ENCODE measurements at regions of chr2 and their contacts with region 1.

Region 1: GRCh38 chr2:86035883-86036668 is 69.6 kb downstream of the POLR1A start:
- DNase-seq: peak; percentile 71
- ATAC-seq: peak; percentile 92
- H3K4me3 ChIP-seq: peak overlapping the region; percentile 49; the same call in 1 of the 2 replicates
- H3K27ac ChIP-seq: peak overlapping the region; percentile 76
- H3K4me1 ChIP-seq: peaks cover 37% of the 10 kb centered on the region
- H3K27me3 ChIP-seq: no peaks in the 10 kb centered on the region
- CTCF ChIP-seq: peak; percentile 39 to 56 (median 49); a peak in 5 of 6 replicates
- EP300 ChIP-seq: peak; percentile 51 to 70
- POLR2A ChIP-seq: no peak; the same call in 1 of the 2 replicates
- RAD21 ChIP-seq: peak; percentile 66; the same call in 1 of the 2 replicates

Region 2: GRCh38 chr2:85852937-85853498 is 183.1 kb before region 1 on chr2:
- CTCF ChIA-PET with region 1: interaction called, 17 read pairs
- POLR2A ChIA-PET with region 1: interaction called, 3 read pairs
- RAD21 ChIA-PET with region 1: interaction called, 14 read pairs
- SMC1A ChIA-PET with region 1: interaction called, 22 read pairs
- in situ Hi-C with region 1: no loop called
- intact Hi-C with region 1: loop called (anchors 2 kb)
- DNase-seq: peak; percentile 88
- ATAC-seq: peak; percentile 84
- H3K4me3 ChIP-seq: peak overlapping the region; percentile 51; the same call in 1 of the 2 replicates
- H3K27ac ChIP-seq: peak overlapping the region; percentile 84
- H3K4me1 ChIP-seq: peaks cover 49% of the 10 kb centered on the region
- H3K27me3 ChIP-seq: no peaks in the 10 kb centered on the region
- CTCF ChIP-seq: no peak
- EP300 ChIP-seq: peak; percentile 5 to 51; a peak in 1 of 4 replicates
- POLR2A ChIP-seq: peak; percentile 57; the same call in 1 of the 2 replicates
- RAD21 ChIP-seq: no peak

Region 3: GRCh38 chr2:85865539-85866164 is 170.4 kb before region 1 on chr2:
- CTCF ChIA-PET with region 1: interaction called, 8 read pairs
- POLR2A ChIA-PET with region 1: interaction called, 3 read pairs
- RAD21 ChIA-PET with region 1: interaction called, 13 read pairs
- SMC1A ChIA-PET with region 1: interaction called, 14 read pairs
- in situ Hi-C with region 1: no loop called
- intact Hi-C with region 1: no loop called
- DNase-seq: peak; percentile 62
- ATAC-seq: peak; percentile 90
- H3K4me3 ChIP-seq: no peak overlapping the region; the same call in 1 of the 2 replicates
- H3K27ac ChIP-seq: no peak overlapping the region
- H3K4me1 ChIP-seq: peaks cover 24% of the 10 kb centered on the region
- H3K27me3 ChIP-seq: no peaks in the 10 kb centered on the region
- CTCF ChIP-seq: no peak
- EP300 ChIP-seq: peak in 1 of 2 experiments; percentile 58; a peak in 1 of 4 replicates
- POLR2A ChIP-seq: no peak
- RAD21 ChIP-seq: peak; percentile 7; the same call in 1 of the 2 replicates

Region 4: GRCh38 chr2:85999061-85999831 is 36.8 kb before region 1 on chr2:
- CTCF ChIA-PET with region 1: interaction called, 56 read pairs
- POLR2A ChIA-PET with region 1: interaction called, 41 read pairs
- RAD21 ChIA-PET with region 1: interaction called, 116 read pairs
- SMC1A ChIA-PET with region 1: interaction called, 114 read pairs
- in situ Hi-C with region 1: no loop called
- intact Hi-C with region 1: loop called (anchors 2 kb)
- DNase-seq: peak; percentile 77
- ATAC-seq: peak; percentile 87
- H3K4me3 ChIP-seq: peak overlapping the region; percentile 10; the same call in 1 of the 2 replicates
- H3K27ac ChIP-seq: peak overlapping the region; percentile 93
- H3K4me1 ChIP-seq: peaks cover 63% of the 10 kb centered on the region
- H3K27me3 ChIP-seq: no peaks in the 10 kb centered on the region
- CTCF ChIP-seq: no peak
- EP300 ChIP-seq: no peak
- POLR2A ChIP-seq: peak; percentile 64
- RAD21 ChIP-seq: no peak

Region 5: DNA sequence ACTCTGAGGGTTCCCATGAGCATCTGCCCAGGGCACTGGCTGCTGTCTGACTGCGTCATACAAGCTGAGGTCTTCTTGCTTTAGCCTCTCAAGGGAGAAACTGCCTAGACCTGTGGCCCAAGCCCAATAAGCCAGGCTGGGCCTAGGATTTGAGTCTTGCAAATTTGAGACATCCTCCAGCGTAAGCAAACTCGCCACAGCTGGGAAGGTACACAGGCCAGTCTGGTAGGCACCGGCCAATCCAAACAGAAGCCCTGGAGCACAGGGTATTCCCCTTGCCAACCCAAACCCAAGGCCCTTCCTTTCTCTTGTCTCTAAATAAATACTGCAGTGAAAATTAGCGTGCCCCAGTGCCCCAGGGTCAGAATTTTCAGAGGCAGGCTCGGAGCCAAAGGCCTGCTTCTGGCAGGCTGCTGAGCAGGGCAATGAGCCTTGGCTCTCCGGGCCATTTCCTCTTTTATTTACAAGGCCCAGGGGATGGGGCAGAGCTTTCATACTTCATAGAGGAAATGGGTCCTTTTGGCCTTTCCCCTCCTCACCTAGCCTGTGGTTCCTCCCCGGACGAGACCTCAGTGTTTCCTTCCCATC is 36.3 kb after region 1 on chr2:
- CTCF ChIA-PET with region 1: interaction called, 75 read pairs
- POLR2A ChIA-PET with region 1: interaction called, 7 read pairs
- RAD21 ChIA-PET with region 1: interaction called, 68 read pairs
- SMC1A ChIA-PET with region 1: interaction called, 46 read pairs
- in situ Hi-C with region 1: no loop called
- intact Hi-C with region 1: loop called (anchors 2 kb)
- DNase-seq: no peak
- ATAC-seq: peak; percentile 92
- H3K4me3 ChIP-seq: no peak overlapping the region
- H3K27ac ChIP-seq: peak overlapping the region; percentile 51
- H3K4me1 ChIP-seq: peaks cover 6% of the 10 kb centered on the region
- H3K27me3 ChIP-seq: no peaks in the 10 kb centered on the region
- CTCF ChIP-seq: no peak
- EP300 ChIP-seq: no peak
- POLR2A ChIP-seq: no peak
- RAD21 ChIP-seq: no peak

Region 6: DNA sequence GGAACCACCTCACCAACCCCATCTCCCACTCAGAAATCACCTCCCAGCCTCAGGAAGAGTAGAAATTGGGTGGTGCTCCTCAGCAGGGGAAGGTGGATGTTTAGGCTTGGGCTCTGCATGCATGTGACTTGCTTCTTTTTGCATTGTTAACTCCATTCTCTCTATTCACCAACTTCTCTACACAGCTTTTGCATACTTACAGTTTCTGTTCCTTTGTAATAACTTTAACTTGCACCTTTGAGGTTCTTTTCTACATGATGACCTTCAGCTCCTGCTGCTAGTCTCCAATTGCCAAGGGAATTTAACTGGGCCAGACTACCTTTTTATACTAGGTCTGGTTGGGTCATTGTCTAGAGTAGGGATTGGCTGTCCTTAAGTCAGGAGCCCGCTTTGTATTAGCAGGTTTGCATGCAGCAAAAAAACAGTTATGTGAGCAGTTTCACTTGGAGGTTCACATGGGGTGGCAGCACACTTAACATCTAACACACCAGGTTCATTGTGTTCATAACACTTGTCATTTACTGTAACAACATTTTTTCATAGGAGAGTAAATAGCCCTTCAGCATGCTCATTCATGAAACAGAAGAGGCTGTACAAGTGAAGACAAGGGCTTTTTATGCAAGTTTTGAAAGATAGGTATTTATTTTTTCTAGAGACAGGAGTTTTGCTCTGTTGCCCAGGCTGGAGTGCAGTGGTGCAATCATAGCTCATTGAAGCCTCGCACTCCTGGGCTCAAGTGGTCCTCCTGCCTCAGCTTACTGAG is 175.1 kb after region 1 on chr2:
- CTCF ChIA-PET with region 1: no interaction called
- POLR2A ChIA-PET with region 1: no interaction called
- RAD21 ChIA-PET with region 1: no interaction called
- SMC1A ChIA-PET with region 1: no interaction called
- in situ Hi-C with region 1: no loop called
- intact Hi-C with region 1: no loop called
- DNase-seq: no peak
- ATAC-seq: no peak; the same call in 2 of the 3 replicates
- H3K4me3 ChIP-seq: no peak overlapping the region
- H3K27ac ChIP-seq: no peak overlapping the region; the same call in 1 of the 2 replicates
- H3K4me1 ChIP-seq: peaks cover 3% of the 10 kb centered on the region; the same call in 1 of the 2 replicates
- H3K27me3 ChIP-seq: no peaks in the 10 kb centered on the region
- CTCF ChIP-seq: no peak
- EP300 ChIP-seq: no peak
- POLR2A ChIP-seq: no peak
- RAD21 ChIP-seq: no peak

Measured in GM12878 (cell line).